SK-N-SH (cell line): ENCODE measurements at regions of chr1 and their contacts with region 1.

Region 1: GRCh38 chr1:207797229-207797961 is 45.5 kb downstream of the CD46 start:
- DNase-seq: peak; percentile 68
- H3K4me3 ChIP-seq: peak overlapping the region in 1 of 2 experiments; percentile 4; a peak in 1 of 4 replicates
- H3K27ac ChIP-seq: peak overlapping the region in 1 of 2 experiments; percentile 34; a peak in 1 of 4 replicates
- H3K4me1 ChIP-seq: peaks cover 0 to 4% of the 10 kb centered on the region in 2 experiments; a peak in 2 of 4 replicates
- H3K27me3 ChIP-seq: no peaks in the 10 kb centered on the region
- CTCF ChIP-seq: peak; percentile 89
- EP300 ChIP-seq: no peak
- RAD21 ChIP-seq: peak; percentile 83

Region 2: DNA sequence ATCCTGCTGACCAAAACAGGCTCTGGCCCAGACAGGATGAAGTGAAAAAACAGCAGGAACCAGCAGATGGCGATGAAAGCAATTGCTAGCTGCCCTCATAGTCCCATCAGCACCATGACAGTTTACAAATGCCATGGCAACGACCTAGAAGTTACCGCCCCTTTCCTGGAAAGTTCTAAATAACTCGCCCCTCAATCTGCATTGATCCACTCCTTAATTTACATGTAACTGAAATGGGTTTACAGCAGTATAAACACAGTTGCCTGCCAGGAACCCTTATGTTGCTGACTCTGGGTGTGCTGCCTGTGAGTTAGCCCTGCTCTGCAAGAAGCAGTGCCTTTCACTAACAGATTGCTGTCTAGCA is 218.0 kb before region 1 on chr1:
- CTCF ChIA-PET with region 1: interaction called, 13 read pairs
- POLR2A ChIA-PET with region 1: no interaction called
- DNase-seq: peak; percentile 28
- H3K4me3 ChIP-seq: no peak overlapping the region
- H3K27ac ChIP-seq: no peak overlapping the region
- H3K4me1 ChIP-seq: no peaks in the 10 kb centered on the region
- H3K27me3 ChIP-seq: peaks cover 13% of the 10 kb centered on the region; the same call in 1 of the 2 replicates
- CTCF ChIP-seq: peak; percentile 57
- EP300 ChIP-seq: no peak
- RAD21 ChIP-seq: peak; percentile 54

Region 3: GRCh38 chr1:207698822-207699483 is 98.4 kb before region 1 on chr1:
- CTCF ChIA-PET with region 1: interaction called, 27 read pairs
- POLR2A ChIA-PET with region 1: no interaction called
- DNase-seq: peak; percentile 24
- H3K4me3 ChIP-seq: no peak overlapping the region
- H3K27ac ChIP-seq: no peak overlapping the region
- H3K4me1 ChIP-seq: no peaks in the 10 kb centered on the region
- H3K27me3 ChIP-seq: no peaks in the 10 kb centered on the region
- CTCF ChIP-seq: peak; percentile 76
- EP300 ChIP-seq: no peak
- RAD21 ChIP-seq: peak; percentile 74

Region 4: GRCh38 chr1:207751790-207752455 is 45.5 kb before region 1 on chr1 and contains the start of gene CD46:
- CTCF ChIA-PET with region 1: interaction called, 35 read pairs
- POLR2A ChIA-PET with region 1: interaction called, 3 read pairs
- DNase-seq: peak; percentile 93
- H3K4me3 ChIP-seq: peak within 1 kb of the TSS; percentile 87 to 99
- H3K27ac ChIP-seq: peak within 1 kb of the TSS; percentile 72 to 93
- H3K4me1 ChIP-seq: peaks cover 17 to 20% of the 10 kb centered on the region in 2 experiments; a peak in 3 of 4 replicates
- H3K27me3 ChIP-seq: no peaks in the 10 kb centered on the region
- CTCF ChIP-seq: no peak
- EP300 ChIP-seq: no peak
- RAD21 ChIP-seq: no peak
- polyA plus RNA-seq, gene CD46: 56.0 and 92.5 TPM in 2 replicates

Region 5: GRCh38 chr1:207811920-207812720 is 14.7 kb after region 1 on chr1:
- CTCF ChIA-PET with region 1: interaction called, 19 read pairs
- POLR2A ChIA-PET with region 1: no interaction called
- DNase-seq: peak; percentile 70
- H3K4me3 ChIP-seq: no peak overlapping the region
- H3K27ac ChIP-seq: no peak overlapping the region
- H3K4me1 ChIP-seq: no peaks in the 10 kb centered on the region; a peak in 1 of 4 replicates
- H3K27me3 ChIP-seq: no peaks in the 10 kb centered on the region
- CTCF ChIP-seq: peak; percentile 33; the same call in 1 of the 2 replicates
- EP300 ChIP-seq: no peak
- RAD21 ChIP-seq: peak; percentile 39

Region 6: GRCh38 chr1:207944571-207944970 is 147.2 kb after region 1 on chr1:
- CTCF ChIA-PET with region 1: no interaction called
- POLR2A ChIA-PET with region 1: no interaction called
- DNase-seq: no peak
- H3K4me3 ChIP-seq: no peak overlapping the region
- H3K27ac ChIP-seq: peak overlapping the region in 1 of 2 experiments; percentile 18; a peak in 1 of 4 replicates
- H3K4me1 ChIP-seq: peaks cover 0 to 4% of the 10 kb centered on the region in 2 experiments; a peak in 2 of 4 replicates
- H3K27me3 ChIP-seq: no peaks in the 10 kb centered on the region
- CTCF ChIP-seq: no peak
- EP300 ChIP-seq: 0 out of 4 replicates have a peak, but pooled peaks of 1 of the 2 experiments have one; percentile 7
- RAD21 ChIP-seq: no peak